ENCODE measurements at regions of chr22 and their contacts with region 1.

Region 1: DNA sequence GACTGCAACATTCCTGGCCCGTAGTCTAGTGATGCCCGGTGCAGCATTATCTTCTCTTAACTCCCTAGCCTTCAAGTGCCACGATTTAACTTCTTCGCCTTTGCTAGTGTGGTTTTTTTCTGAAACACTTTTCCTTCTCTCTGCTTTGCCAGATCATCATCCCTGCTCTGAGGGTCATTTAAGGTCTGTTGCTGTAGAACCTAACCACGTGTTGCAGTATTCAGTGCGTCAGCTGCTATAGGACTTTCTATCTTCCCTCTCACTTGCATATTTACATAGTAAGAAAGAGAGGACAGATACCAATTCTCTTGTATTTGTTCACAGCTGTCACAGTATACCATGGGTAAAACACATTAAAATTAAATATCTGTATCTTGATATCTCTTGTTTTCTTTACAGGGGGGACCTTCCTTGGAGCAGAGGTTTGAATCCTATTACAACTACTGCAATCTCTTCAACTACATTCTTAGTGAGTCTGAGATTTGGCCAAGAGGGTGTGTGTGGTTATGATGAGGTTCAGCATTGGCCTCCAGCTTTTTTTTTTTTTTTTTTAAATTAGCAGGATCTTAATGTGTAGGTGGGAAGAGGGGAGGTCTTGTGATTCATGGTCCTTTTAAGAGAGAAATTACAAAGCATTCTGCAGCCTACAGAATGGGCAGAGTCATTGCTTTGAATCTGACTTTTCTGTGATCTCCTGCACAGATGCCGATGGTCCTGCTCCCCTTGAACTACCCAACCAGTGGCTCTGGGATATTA is 13.5 kb downstream of the EIF3L start:
- DNase-seq: no peak
- ATAC-seq: no peak
- H3K4me3 ChIP-seq: no peak overlapping the region
- H3K27ac ChIP-seq: no peak overlapping the region
- H3K4me1 ChIP-seq: no peaks in the 10 kb centered on the region
- H3K27me3 ChIP-seq: no peaks in the 10 kb centered on the region
- CTCF ChIP-seq: no peak
- EP300 ChIP-seq: no peak
- POLR2A ChIP-seq: no peak
- RAD21 ChIP-seq: no peak

Region 2: GRCh38 chr22:37538590-37539357 is 324.0 kb before region 1 on chr22:
- CTCF ChIA-PET with region 1: interaction called, 5 read pairs
- POLR2A ChIA-PET with region 1: no interaction called
- RAD21 ChIA-PET with region 1: interaction called, 6 read pairs
- SMC1A ChIA-PET with region 1: no interaction called
- in situ Hi-C with region 1: no loop called
- intact Hi-C with region 1: loop called (anchors 10 kb)
- DNase-seq: peak; percentile 80
- ATAC-seq: peak; percentile 98
- H3K4me3 ChIP-seq: no peak overlapping the region
- H3K27ac ChIP-seq: no peak overlapping the region
- H3K4me1 ChIP-seq: peaks cover 27% of the 10 kb centered on the region
- H3K27me3 ChIP-seq: no peaks in the 10 kb centered on the region
- CTCF ChIP-seq: peak; percentile 96 to 99 (median 96)
- EP300 ChIP-seq: peak in 1 of 2 experiments; percentile 37; a peak in 1 of 4 replicates
- POLR2A ChIP-seq: no peak
- RAD21 ChIP-seq: peak; percentile 96

Region 3: GRCh38 chr22:37781479-37781911 is 81.3 kb before region 1 on chr22:
- CTCF ChIA-PET with region 1: no interaction called
- POLR2A ChIA-PET with region 1: no interaction called
- RAD21 ChIA-PET with region 1: no interaction called
- SMC1A ChIA-PET with region 1: no interaction called
- in situ Hi-C with region 1: no loop called
- intact Hi-C with region 1: no loop called
- DNase-seq: no peak
- ATAC-seq: no peak
- H3K4me3 ChIP-seq: no peak overlapping the region
- H3K27ac ChIP-seq: no peak overlapping the region
- H3K4me1 ChIP-seq: peaks cover 17% of the 10 kb centered on the region
- H3K27me3 ChIP-seq: no peaks in the 10 kb centered on the region
- CTCF ChIP-seq: no peak
- EP300 ChIP-seq: no peak
- POLR2A ChIP-seq: no peak
- RAD21 ChIP-seq: no peak

Region 4: DNA sequence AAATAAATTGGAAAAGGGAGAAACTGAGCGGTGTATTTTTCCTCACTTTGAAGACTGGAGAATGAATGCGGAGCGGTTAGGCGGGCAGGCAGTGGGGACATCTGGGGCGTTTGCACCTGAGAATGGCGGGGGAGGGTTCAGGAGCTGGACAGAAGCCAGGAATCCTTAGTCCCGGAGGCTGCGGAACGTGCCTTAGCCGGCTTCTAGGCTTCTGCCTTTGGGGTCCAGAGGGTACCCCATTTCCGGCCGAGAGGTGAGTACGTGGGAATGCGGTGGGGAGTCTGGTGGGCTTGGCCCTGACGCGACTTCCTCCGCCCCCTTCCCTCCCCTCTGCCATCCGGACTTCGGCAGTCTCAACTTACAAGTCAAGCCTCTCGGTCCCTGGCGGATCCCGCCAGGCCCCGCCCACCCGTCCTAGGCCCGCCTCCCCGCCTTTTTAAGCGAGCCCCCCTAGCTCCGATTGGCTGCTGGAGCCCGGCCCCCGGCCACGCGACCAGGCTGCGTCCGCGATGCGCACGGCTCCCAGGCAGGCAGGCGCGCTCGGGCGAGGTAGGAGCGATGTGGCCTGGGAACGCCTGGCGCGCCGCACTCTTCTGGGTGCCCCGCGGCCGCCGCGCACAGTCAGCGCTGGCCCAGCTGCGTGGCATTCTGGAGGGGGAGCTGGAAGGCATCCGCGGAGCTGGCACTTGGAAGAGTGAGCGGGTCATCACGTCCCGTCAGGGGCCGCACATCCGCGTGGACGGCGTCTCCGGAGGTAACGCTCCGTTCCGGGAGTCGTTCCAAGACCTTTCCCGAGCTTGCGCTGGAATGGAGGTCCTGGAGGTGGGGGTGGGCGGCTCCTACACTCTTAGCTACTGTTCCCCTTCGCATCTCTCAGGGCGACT is 55.1 kb before region 1 on chr22 and contains the start of gene GCAT:
- CTCF ChIA-PET with region 1: interaction called, 14 read pairs
- POLR2A ChIA-PET with region 1: no interaction called
- RAD21 ChIA-PET with region 1: no interaction called
- SMC1A ChIA-PET with region 1: interaction called, 7 read pairs
- in situ Hi-C with region 1: no loop called
- intact Hi-C with region 1: no loop called
- DNase-seq: peak; percentile 58
- ATAC-seq: peak; percentile 99
- H3K4me3 ChIP-seq: peak within 1 kb of the TSS; percentile 70
- H3K27ac ChIP-seq: no peak within 1 kb of the TSS
- H3K4me1 ChIP-seq: peaks cover 5% of the 10 kb centered on the region
- H3K27me3 ChIP-seq: peaks cover 12 to 33% of the 10 kb centered on the region in 2 experiments
- CTCF ChIP-seq: no peak
- EP300 ChIP-seq: no peak
- POLR2A ChIP-seq: peak; percentile 88
- RAD21 ChIP-seq: no peak
- polyA plus RNA-seq, gene GCAT: 0.95 to 2.4 TPM

Region 5: DNA sequence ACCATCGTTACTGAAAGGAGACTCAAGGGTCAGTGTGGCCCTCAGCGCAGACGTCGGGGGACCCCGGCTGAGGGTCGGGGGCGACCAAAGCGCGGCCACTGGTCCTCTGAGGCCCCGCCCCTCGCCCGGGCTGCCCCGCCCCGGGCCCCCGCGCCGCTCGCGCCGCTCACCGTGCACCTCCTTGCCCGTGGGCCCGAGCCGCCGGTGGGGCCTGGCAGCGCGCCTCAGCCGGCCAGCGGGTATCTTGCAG is 19.1 kb before region 1 on chr22:
- CTCF ChIA-PET with region 1: interaction called, 32 read pairs
- POLR2A ChIA-PET with region 1: interaction called, 4 read pairs
- RAD21 ChIA-PET with region 1: interaction called, 5 read pairs
- SMC1A ChIA-PET with region 1: interaction called, 3 read pairs
- in situ Hi-C with region 1: no loop called
- intact Hi-C with region 1: no loop called
- DNase-seq: no peak
- ATAC-seq: peak; percentile 67
- H3K4me3 ChIP-seq: peak overlapping the region; percentile 86
- H3K27ac ChIP-seq: peak overlapping the region; percentile 51
- H3K4me1 ChIP-seq: peaks cover 8% of the 10 kb centered on the region; the same call in 1 of the 2 replicates
- H3K27me3 ChIP-seq: no peaks in the 10 kb centered on the region
- CTCF ChIP-seq: no peak
- EP300 ChIP-seq: no peak
- POLR2A ChIP-seq: no peak
- RAD21 ChIP-seq: no peak

Region 6: GRCh38 chr22:37880668-37881440 is 18.1 kb after region 1 on chr22:
- CTCF ChIA-PET with region 1: interaction called, 18 read pairs
- POLR2A ChIA-PET with region 1: interaction called, 8 read pairs
- RAD21 ChIA-PET with region 1: no interaction called
- SMC1A ChIA-PET with region 1: interaction called, 3 read pairs
- in situ Hi-C with region 1: no loop called
- intact Hi-C with region 1: no loop called
- DNase-seq: no peak
- ATAC-seq: no peak
- H3K4me3 ChIP-seq: no peak overlapping the region
- H3K27ac ChIP-seq: no peak overlapping the region
- H3K4me1 ChIP-seq: no peaks in the 10 kb centered on the region
- H3K27me3 ChIP-seq: no peaks in the 10 kb centered on the region
- CTCF ChIP-seq: no peak
- EP300 ChIP-seq: no peak
- POLR2A ChIP-seq: no peak
- RAD21 ChIP-seq: no peak

Region 7: DNA sequence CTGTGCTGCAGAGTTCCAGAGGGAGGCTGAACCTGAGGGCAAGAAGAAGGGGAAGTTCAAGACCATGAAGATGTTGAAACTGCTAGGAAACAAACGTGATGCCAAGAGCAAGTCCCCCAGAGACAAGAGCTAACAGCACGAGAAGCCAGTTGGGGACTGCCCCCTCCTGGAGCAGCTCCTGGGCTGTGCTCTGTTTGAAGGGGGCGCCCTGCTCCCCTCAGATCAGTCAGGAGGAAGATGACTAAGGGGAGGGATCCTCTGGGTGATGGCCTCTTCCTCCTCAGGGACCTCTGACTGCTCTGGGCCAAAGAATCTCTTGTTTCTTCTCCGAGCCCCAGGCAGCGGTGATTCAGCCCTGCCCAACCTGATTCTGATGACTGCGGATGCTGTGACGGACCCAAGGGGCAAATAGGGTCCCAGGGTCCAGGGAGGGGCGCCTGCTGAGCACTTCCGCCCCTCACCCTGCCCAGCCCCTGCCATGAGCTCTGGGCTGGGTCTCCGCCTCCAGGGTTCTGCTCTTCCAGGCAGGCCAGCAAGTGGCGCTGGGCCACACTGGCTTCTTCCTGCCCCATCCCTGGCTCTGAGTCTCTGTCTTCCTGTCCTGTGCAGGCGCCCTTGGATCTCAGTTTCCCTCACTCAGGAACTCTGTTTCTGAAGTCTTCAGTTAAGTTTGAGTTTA is 78.1 kb after region 1 on chr22:
- CTCF ChIA-PET with region 1: interaction called, 10 read pairs
- POLR2A ChIA-PET with region 1: no interaction called
- RAD21 ChIA-PET with region 1: no interaction called
- SMC1A ChIA-PET with region 1: no interaction called
- in situ Hi-C with region 1: no loop called
- intact Hi-C with region 1: no loop called
- DNase-seq: no peak
- ATAC-seq: no peak
- H3K4me3 ChIP-seq: no peak overlapping the region
- H3K27ac ChIP-seq: no peak overlapping the region
- H3K4me1 ChIP-seq: no peaks in the 10 kb centered on the region
- H3K27me3 ChIP-seq: no peaks in the 10 kb centered on the region
- CTCF ChIP-seq: no peak
- EP300 ChIP-seq: no peak
- POLR2A ChIP-seq: no peak
- RAD21 ChIP-seq: no peak

Measured in GM12878 (cell line).